ENCODE measurements at regions of chr5 and their contacts with region 1.

Region 1: GRCh38 chr5:72847989-72848473 is 31.6 kb downstream of the TNPO1 start:
- DNase-seq: peak; percentile 82
- H3K4me3 Mint-ChIP-seq: peak overlapping the region; percentile 95
- H3K27ac Mint-ChIP-seq: peak overlapping the region; percentile 97
- H3K4me1 Mint-ChIP-seq: peaks cover 35% of the 10 kb centered on the region
- H3K27me3 Mint-ChIP-seq: peaks cover 14% of the 10 kb centered on the region

Region 2: DNA sequence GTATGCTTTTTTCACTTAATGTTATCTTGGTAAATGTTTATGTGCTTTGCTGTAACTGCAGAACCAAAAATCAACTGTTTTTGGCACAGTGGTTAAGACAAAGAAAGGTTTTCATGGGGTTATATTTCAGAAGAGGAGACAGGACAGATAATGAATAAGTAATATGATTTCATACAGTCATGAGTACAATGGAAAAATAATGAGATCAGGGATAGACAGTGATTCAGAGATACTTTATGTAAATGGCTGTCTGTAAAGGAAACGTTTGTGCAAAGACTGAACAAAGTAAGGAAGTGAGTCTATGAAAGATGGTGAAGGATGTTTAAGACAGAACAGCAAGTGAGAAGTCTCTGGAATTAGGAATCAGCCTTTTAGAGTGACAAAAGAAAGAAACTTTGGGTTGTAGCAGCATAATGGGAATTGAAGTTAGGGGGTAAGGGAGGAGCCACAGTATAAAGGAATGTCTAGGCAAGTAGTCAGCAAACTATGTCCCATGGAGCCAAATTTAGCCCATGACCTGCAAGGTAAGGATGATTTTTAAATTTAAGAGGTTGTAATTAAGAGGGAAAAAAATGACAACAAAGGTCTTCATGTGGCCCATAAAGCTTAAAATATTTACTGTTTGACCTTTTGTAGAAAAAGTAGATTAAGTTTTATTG is 23.5 kb after region 1 on chr5:
- intact Hi-C with region 1: loop called (anchors 1 kb)
- DNase-seq: no peak
- H3K4me3 Mint-ChIP-seq: no peak overlapping the region
- H3K27ac Mint-ChIP-seq: peak overlapping the region; percentile 73
- H3K4me1 Mint-ChIP-seq: peaks cover 7% of the 10 kb centered on the region
- H3K27me3 Mint-ChIP-seq: no peaks in the 10 kb centered on the region

Region 3: GRCh38 chr5:72895758-72896157 is 47.7 kb after region 1 on chr5:
- intact Hi-C with region 1: loop called (anchors 5 kb)
- DNase-seq: no peak
- H3K4me3 Mint-ChIP-seq: no peak overlapping the region
- H3K27ac Mint-ChIP-seq: peak overlapping the region; percentile 78
- H3K4me1 Mint-ChIP-seq: peaks cover 12% of the 10 kb centered on the region
- H3K27me3 Mint-ChIP-seq: no peaks in the 10 kb centered on the region

Region 4: GRCh38 chr5:73103870-73104299 is 255.9 kb after region 1 on chr5:
- intact Hi-C with region 1: no loop called
- DNase-seq: no peak
- H3K4me3 Mint-ChIP-seq: no peak overlapping the region
- H3K27ac Mint-ChIP-seq: no peak overlapping the region
- H3K4me1 Mint-ChIP-seq: no peaks in the 10 kb centered on the region
- H3K27me3 Mint-ChIP-seq: peaks cover 10% of the 10 kb centered on the region